H1 (cell line): ENCODE measurements at regions of chr12 and their contacts with region 1.

Region 1: GRCh38 chr12:79690638-79691493 is at the start of gene PAWR:
- DNase-seq: peak; percentile 63 to 88
- H3K4me3 ChIP-seq: peak within 1 kb of the TSS; percentile 81 to 96 (median 93)
- H3K27ac ChIP-seq: peak within 1 kb of the TSS; percentile 88
- H3K4me1 ChIP-seq: peaks cover 4 to 12% (median 5%) of the 10 kb centered on the region in 4 experiments; a peak in 6 of 7 replicates
- H3K27me3 ChIP-seq: no peaks in the 10 kb centered on the region
- CTCF ChIP-seq: peak in 1 of 3 experiments; percentile 37; a peak in 2 of 4 replicates
- EP300 ChIP-seq: no peak
- POLR2A ChIP-seq: peak; percentile 62 to 85
- RAD21 ChIP-seq: peak; percentile 27 to 42; a peak in 2 of 4 replicates
- total RNA-seq, gene PAWR: 327 and 338 TPM in 2 replicates

Region 2: GRCh38 chr12:79674629-79675028 is 16.2 kb before region 1 on chr12:
- CTCF ChIA-PET with region 1: interaction called, 7 read pairs
- POLR2A ChIA-PET with region 1: interaction called, 91 read pairs
- DNase-seq: no peak
- H3K4me3 ChIP-seq: peak overlapping the region in 1 of 4 experiments; percentile 25; a peak in 1 of 8 replicates
- H3K27ac ChIP-seq: no peak overlapping the region
- H3K4me1 ChIP-seq: peaks cover 0 to 18% (median 11%) of the 10 kb centered on the region in 4 experiments; a peak in 5 of 7 replicates
- H3K27me3 ChIP-seq: no peaks in the 10 kb centered on the region
- CTCF ChIP-seq: no peak
- EP300 ChIP-seq: no peak
- POLR2A ChIP-seq: no peak
- RAD21 ChIP-seq: no peak

Region 3: DNA sequence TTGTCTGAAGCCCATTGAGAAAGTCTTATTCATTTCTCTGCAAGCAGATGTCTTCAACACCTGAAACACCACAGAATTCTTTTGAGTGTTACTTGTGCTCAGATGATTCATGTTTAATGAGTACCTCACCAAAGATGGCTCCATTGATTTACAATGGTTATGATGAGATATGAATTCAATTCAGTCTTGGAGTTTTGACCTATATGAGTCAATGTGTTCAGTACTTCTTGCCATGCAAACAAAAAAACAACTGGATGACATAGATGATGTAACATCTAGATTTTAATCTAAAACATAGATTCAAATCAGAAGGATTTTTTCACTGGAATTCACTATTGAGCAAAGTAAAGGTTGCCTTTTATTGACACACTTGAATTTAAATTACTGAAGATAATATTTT is 15.3 kb after region 1 on chr12:
- CTCF ChIA-PET with region 1: interaction called, 3 read pairs
- POLR2A ChIA-PET with region 1: interaction called, 11 read pairs
- DNase-seq: no peak
- H3K4me3 ChIP-seq: no peak overlapping the region
- H3K27ac ChIP-seq: no peak overlapping the region
- H3K4me1 ChIP-seq: no peaks in the 10 kb centered on the region; a peak in 2 of 7 replicates
- H3K27me3 ChIP-seq: no peaks in the 10 kb centered on the region
- CTCF ChIP-seq: no peak
- EP300 ChIP-seq: no peak
- POLR2A ChIP-seq: no peak
- RAD21 ChIP-seq: no peak

Region 4: GRCh38 chr12:79761341-79761740 is 70.5 kb after region 1 on chr12:
- CTCF ChIA-PET with region 1: no interaction called
- POLR2A ChIA-PET with region 1: no interaction called
- DNase-seq: no peak
- H3K4me3 ChIP-seq: no peak overlapping the region
- H3K27ac ChIP-seq: no peak overlapping the region
- H3K4me1 ChIP-seq: no peaks in the 10 kb centered on the region
- H3K27me3 ChIP-seq: no peaks in the 10 kb centered on the region
- CTCF ChIP-seq: no peak
- EP300 ChIP-seq: no peak
- POLR2A ChIP-seq: no peak
- RAD21 ChIP-seq: no peak